ENCODE measurements at regions of chr6 and their contacts with region 1.

Region 1: GRCh38 chr6:113994918-113995342 is 24.0 kb upstream of the HDAC2 start:
- DNase-seq: no peak
- ATAC-seq: peak; percentile 53
- H3K4me3 ChIP-seq: no peak overlapping the region
- H3K27ac ChIP-seq: peak overlapping the region in 1 of 2 donors; percentile 57
- H3K4me1 ChIP-seq: peaks cover 0 to 2% of the 10 kb centered on the region in 2 donors
- H3K27me3 ChIP-seq: no peaks in the 10 kb centered on the region

Region 2: GRCh38 chr6:113873043-113873667 is 121.8 kb before region 1 on chr6:
- intact Hi-C with region 1: no loop called
- DNase-seq: peak in 1 of 2 donors; percentile 68
- ATAC-seq: peak; percentile 63
- H3K4me3 ChIP-seq: no peak overlapping the region
- H3K27ac ChIP-seq: no peak overlapping the region
- H3K4me1 ChIP-seq: peaks cover 0 to under 1% of the 10 kb centered on the region in 2 donors
- H3K27me3 ChIP-seq: no peaks in the 10 kb centered on the region

Region 3: DNA sequence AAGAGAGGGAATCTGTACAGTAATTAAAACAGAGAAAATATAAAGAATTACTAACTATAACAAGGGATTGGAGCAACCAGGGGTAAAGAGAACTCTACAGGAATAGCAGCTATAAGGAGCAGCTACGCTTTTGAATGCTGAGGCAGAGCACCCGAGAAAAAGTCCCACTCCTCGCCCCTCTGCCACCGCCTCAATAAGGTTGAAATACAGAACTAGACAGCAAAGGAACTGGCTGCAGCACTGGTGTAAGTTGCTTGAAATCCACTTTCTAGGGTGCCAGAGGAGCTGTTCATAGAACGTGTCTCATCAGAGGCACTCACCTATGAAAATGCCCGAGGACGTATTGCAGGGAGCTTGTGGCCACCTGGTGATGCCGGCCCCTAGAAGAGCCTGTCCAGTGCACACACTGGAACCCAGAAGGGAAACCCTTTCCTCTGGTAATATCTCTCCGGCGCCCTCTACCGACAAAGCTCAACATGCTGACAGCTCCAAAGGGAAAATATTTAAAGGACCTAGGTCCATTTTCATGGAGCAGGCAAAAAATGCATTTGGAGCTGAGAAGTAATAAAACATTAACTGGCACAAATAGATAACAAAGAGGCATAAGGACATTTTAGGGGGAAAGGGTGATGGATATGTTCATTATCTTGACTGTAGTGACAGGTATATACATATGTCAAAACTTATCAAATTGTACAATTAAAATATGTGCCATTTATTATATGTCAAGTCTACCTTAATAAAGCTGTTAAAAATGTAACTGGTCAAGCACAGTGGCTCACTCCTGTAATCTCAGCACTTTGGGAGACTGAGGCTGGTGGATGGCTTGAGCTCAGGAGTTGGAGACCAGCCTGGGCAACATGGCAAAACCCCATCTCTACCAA is 113.4 kb after region 1 on chr6:
- intact Hi-C with region 1: loop called in 1 of 2 experiments (anchors 5 kb)
- DNase-seq: peak; percentile 78 to 80
- ATAC-seq: no peak
- H3K4me3 ChIP-seq: no peak overlapping the region
- H3K27ac ChIP-seq: no peak overlapping the region
- H3K4me1 ChIP-seq: no peaks in the 10 kb centered on the region
- H3K27me3 ChIP-seq: no peaks in the 10 kb centered on the region